ENCODE measurements at regions of chr1 and their contacts with region 1.

Region 1: GRCh38 chr1:45803301-45803780 is at the start of gene MAST2:
- DNase-seq: peak; percentile 87 to 93
- H3K4me3 ChIP-seq: peak within 1 kb of the TSS; percentile 56 to 60
- H3K27ac ChIP-seq: peak within 1 kb of the TSS; percentile 71 to 81
- H3K4me1 ChIP-seq: peaks cover 0 to 24% (median 10%) of the 10 kb centered on the region in 4 donors
- H3K27me3 ChIP-seq: no peaks in the 10 kb centered on the region
- CTCF ChIP-seq: no peak

Region 2: GRCh38 chr1:45750298-45751038 is 52.9 kb before region 1 on chr1 and contains the start of gene IPP:
- intact Hi-C with region 1: loop called (anchors 2 kb)
- DNase-seq: peak; percentile 94 to 99
- H3K4me3 ChIP-seq: peak within 1 kb of the TSS; percentile 58 to 75
- H3K27ac ChIP-seq: peak within 1 kb of the TSS; percentile 92 to 100
- H3K4me1 ChIP-seq: peaks cover 0 to 21% (median 13%) of the 10 kb centered on the region in 4 donors
- H3K27me3 ChIP-seq: no peaks in the 10 kb centered on the region
- CTCF ChIP-seq: peak in 1 of 2 experiments; percentile 6